Gastrocnemius medialis (tissue), 4 donors: ENCODE measurements at regions of chr16 and their contacts with region 1.

Region 1: DNA sequence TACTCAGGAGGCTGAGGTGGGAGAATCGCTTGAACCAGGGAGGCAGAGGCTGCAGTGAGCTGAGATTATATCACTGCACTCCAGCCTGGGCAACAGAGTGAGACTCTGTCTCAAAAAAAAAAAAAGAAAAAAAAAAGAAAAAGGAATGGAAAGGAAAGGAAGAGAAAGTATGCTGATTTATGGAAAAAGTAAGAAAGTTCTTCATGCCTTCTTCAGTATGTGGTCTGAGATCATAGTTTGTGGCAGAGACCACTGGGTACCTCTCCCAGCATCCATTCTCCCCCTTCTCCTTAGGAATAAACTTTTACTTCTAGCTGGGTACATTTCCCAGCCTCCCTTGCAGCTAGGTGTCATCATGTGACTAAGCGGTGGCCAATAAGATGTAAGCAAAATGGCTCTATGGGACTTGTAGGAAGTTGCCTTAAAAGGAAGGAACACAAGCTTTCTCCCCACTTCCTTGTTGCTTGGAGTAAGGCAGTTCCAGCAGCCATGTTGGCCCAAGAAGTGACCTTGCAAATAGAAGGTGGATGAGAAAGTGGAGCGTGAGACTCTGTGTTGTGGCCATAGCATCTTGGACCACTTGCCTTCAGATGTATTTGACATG is 26.1 kb upstream of the XPO6 start:
- DNase-seq: no peak
- ATAC-seq: no peak
- H3K4me3 ChIP-seq: no peak overlapping the region
- H3K27ac ChIP-seq: no peak overlapping the region
- H3K4me1 ChIP-seq: no peaks in the 10 kb centered on the region
- H3K27me3 ChIP-seq: no peaks in the 10 kb centered on the region
- CTCF ChIP-seq: no peak
- POLR2A ChIP-seq: no peak

Region 2: GRCh38 chr16:27816561-27816960 is 421.3 kb before region 1 on chr16:
- in situ Hi-C with region 1: no loop called
- intact Hi-C with region 1: no loop called
- DNase-seq: no peak
- ATAC-seq: no peak
- H3K4me3 ChIP-seq: no peak overlapping the region
- H3K27ac ChIP-seq: no peak overlapping the region
- H3K4me1 ChIP-seq: no peaks in the 10 kb centered on the region
- H3K27me3 ChIP-seq: no peaks in the 10 kb centered on the region
- CTCF ChIP-seq: no peak
- POLR2A ChIP-seq: no peak

Region 3: GRCh38 chr16:28042811-28043210 is 195.0 kb before region 1 on chr16:
- in situ Hi-C with region 1: no loop called
- intact Hi-C with region 1: no loop called
- DNase-seq: no peak
- ATAC-seq: peak in 1 of 2 donors; percentile 65
- H3K4me3 ChIP-seq: peak overlapping the region in 1 of 4 donors; percentile 13
- H3K27ac ChIP-seq: no peak overlapping the region
- H3K4me1 ChIP-seq: peaks cover 6 to 8% of the 10 kb centered on the region in 2 donors
- H3K27me3 ChIP-seq: no peaks in the 10 kb centered on the region
- CTCF ChIP-seq: no peak
- POLR2A ChIP-seq: no peak

Region 4: DNA sequence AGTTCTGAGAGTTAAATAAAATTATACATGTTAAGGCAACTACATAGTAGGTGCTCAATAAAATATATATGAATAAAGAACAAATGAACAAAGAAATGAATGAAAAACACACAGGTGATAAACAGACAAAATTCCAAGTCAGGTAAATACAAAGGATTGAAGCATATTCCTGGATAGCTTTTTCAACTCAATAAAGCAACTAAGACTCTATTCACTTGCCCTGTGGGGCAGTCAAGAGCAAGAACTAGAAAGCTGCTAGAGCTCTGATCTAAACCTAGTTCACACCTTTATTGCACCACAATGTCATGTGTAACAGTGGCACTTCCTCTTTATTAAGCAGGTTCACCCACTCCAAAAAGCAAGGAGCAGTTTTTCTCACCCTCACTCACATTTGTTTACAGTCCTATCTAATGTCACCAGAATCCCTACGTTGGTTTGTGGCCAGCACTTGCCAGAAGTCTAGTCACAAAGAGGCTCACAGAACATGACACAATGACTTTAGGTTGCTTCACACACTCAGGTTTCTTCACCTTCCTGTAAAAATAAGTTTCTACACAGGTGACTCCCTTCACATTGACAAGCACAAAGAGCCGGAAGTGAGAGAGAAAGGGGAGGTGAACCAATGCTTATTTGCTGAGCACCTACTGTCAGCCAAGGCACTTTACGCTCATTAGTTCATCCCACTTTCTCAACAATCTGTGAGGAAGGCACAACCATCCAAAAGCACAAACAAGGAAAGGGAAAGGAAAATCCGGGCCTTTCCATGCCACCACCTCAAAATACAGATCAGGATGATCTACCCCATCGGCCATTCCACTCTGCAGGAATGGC is 96.9 kb before region 1 on chr16:
- in situ Hi-C with region 1: loop called in 1 of 4 experiments (anchors 25 kb)
- intact Hi-C with region 1: no loop called
- DNase-seq: peak; percentile 21 to 68
- ATAC-seq: peak; percentile 90 to 96
- H3K4me3 ChIP-seq: no peak overlapping the region
- H3K27ac ChIP-seq: peak overlapping the region; percentile 39 to 73 (median 58)
- H3K4me1 ChIP-seq: peaks cover 0 to 3% of the 10 kb centered on the region in 2 donors
- H3K27me3 ChIP-seq: no peaks in the 10 kb centered on the region
- CTCF ChIP-seq: peak in 1 of 5 experiments; percentile 21
- POLR2A ChIP-seq: no peak